H1 (cell line): ENCODE measurements at regions of chr5 and their contacts with region 1.

Region 1: DNA sequence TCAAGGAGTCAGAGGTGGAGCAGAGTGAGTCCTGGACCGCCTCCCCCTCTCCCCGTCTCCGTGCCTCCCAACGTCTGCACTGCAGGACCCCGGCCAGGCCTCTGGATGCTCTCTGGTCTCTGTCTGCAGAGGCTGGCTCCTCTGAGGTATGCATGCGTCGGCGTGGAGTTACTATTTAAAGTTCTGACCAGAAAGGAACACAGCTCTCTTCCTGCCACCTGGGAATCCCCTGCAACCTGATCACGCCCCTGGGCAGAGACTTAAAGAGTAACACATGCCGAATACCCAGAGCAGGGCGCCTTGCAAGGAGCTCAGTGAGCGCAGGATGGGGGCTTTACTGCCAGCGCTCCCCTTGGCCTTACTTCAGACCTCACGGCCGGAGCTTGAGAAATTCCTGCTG is 16.0 kb downstream of the ANXA6 start:
- DNase-seq: peak in 1 of 2 experiments; percentile 58
- H3K4me3 ChIP-seq: no peak overlapping the region
- H3K27ac ChIP-seq: peak overlapping the region; percentile 34; the same call in 1 of the 2 replicates
- H3K4me1 ChIP-seq: peaks cover 0 to 12% (median 7%) of the 10 kb centered on the region in 4 experiments; a peak in 5 of 7 replicates
- H3K27me3 ChIP-seq: no peaks in the 10 kb centered on the region; a peak in 1 of 7 replicates
- CTCF ChIP-seq: no peak
- EP300 ChIP-seq: no peak
- POLR2A ChIP-seq: peak in 1 of 2 experiments; percentile 32; a peak in 1 of 3 replicates
- RAD21 ChIP-seq: no peak

Region 2: GRCh38 chr5:151157426-151158286 is 16.1 kb after region 1 on chr5 and contains the start of gene ANXA6:
- CTCF ChIA-PET with region 1: interaction called, 810 read pairs
- POLR2A ChIA-PET with region 1: interaction called, 11 read pairs
- DNase-seq: peak; percentile 50 to 84
- H3K4me3 ChIP-seq: peak within 1 kb of the TSS; percentile 44 to 81 (median 72)
- H3K27ac ChIP-seq: no peak within 1 kb of the TSS
- H3K4me1 ChIP-seq: peaks cover 0 to 16% (median 11%) of the 10 kb centered on the region in 4 experiments; a peak in 5 of 7 replicates
- H3K27me3 ChIP-seq: peaks cover 0 to 2% (median 1%) of the 10 kb centered on the region in 4 experiments; a peak in 2 of 7 replicates
- CTCF ChIP-seq: no peak
- EP300 ChIP-seq: no peak
- POLR2A ChIP-seq: peak in 1 of 2 experiments; percentile 19; a peak in 1 of 3 replicates
- RAD21 ChIP-seq: no peak
- total RNA-seq, gene ANXA6: 78.6 and 85.2 TPM in 2 replicates